Activated naive CD4-positive, alpha-beta T cell treated with anti-CD3 and anti-CD28 coated beads for 36 hours (primary cell): ENCODE measurements at regions of chr4 and their contacts with region 1.

Region 1: GRCh38 chr4:128454281-128455075 is 166.9 kb upstream of the PGRMC2 start:
- DNase-seq: peak; percentile 84
- H3K4me3 Mint-ChIP-seq: peak overlapping the region; percentile 21
- H3K27ac Mint-ChIP-seq: no peak overlapping the region
- H3K4me1 Mint-ChIP-seq: peaks cover 8% of the 10 kb centered on the region
- H3K27me3 Mint-ChIP-seq: no peaks in the 10 kb centered on the region

Region 2: DNA sequence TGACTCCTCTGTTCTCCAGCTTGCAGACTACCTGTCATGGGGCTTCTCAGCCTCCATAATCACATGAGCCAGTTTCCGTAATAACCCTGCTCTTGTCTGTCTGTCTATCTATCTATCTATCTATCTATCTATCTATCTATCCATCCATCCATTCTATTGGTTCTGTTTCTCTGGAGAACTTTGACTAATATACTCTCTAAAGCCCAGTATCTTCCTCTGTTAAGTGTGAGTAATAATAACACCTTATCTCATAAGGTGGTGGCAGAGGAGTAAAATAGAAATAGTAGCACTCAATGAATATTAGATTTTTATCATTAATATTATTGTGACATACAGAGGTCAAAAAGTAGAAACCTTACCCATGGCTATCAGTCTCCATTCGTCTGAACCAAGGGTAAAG is 11.0 kb after region 1 on chr4:
- CTCF ChIA-PET with region 1: interaction called, 14 read pairs
- intact Hi-C with region 1: no loop called
- DNase-seq: no peak
- H3K4me3 Mint-ChIP-seq: no peak overlapping the region
- H3K27ac Mint-ChIP-seq: no peak overlapping the region
- H3K4me1 Mint-ChIP-seq: no peaks in the 10 kb centered on the region
- H3K27me3 Mint-ChIP-seq: no peaks in the 10 kb centered on the region

Region 3: DNA sequence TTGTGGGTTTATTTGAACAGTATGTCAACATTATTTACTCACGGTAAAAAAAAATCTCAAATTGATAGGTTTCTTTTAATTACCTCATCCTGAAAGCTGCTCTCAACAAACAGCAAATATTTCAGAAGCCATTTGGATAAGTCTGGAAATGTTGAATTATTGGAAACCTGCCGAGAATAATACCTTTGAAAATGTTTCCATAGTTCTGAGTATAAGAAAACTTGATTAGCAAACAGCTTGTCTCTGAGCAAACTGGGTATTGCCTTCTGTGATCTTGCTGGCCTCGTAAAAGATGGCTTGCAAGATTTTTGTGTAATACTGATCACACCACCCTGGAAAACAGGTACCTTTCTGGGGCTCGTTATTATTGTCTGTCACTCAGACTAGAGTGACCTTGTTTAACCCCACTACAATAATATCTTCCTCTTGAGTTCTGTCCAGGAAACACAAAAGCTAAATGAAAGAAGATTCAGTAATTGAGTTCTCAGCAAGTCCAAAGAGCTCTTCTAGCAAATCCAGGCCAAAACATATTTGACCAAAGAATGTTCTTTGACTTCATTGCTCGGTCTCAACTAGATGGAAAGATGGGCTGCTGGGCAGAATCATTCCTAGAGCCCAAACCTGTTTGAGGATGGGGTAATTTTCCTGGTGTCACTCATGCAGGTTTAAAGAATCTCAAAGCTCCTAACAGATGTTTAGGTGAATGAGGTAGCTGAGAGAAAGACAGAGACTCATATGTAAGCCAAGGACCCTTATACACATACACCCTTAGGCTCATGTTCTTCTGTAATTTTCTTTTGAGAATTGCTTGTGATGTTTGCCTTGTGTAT is 99.4 kb after region 1 on chr4:
- CTCF ChIA-PET with region 1: interaction called, 4 read pairs
- intact Hi-C with region 1: loop called (anchors 5 kb)
- DNase-seq: no peak
- H3K4me3 Mint-ChIP-seq: peak overlapping the region; percentile 73
- H3K27ac Mint-ChIP-seq: no peak overlapping the region
- H3K4me1 Mint-ChIP-seq: peaks cover 13% of the 10 kb centered on the region
- H3K27me3 Mint-ChIP-seq: peaks cover 7% of the 10 kb centered on the region

Region 4: DNA sequence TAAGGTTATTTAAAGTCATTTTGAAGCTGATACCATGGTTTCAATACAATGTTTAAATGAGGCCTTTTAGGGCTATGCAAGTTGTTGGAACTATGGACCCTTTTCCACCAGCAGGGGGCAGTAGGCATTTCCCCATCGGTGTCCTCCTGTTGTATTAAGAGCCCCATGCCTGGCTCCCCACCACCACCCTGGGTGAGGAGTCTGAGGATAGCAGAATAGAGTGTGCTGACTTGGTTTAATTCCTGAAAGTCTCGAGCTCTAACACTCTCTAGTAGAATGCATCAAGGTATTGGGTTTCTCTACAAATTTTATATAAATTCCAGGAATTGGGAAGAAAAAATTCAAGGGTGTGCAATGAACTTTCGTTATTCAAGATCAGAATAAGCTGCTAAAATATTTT is 120.2 kb after region 1 on chr4:
- CTCF ChIA-PET with region 1: interaction called, 10 read pairs
- intact Hi-C with region 1: loop called (anchors 5 kb)
- DNase-seq: peak; percentile 91
- H3K4me3 Mint-ChIP-seq: no peak overlapping the region
- H3K27ac Mint-ChIP-seq: no peak overlapping the region
- H3K4me1 Mint-ChIP-seq: no peaks in the 10 kb centered on the region
- H3K27me3 Mint-ChIP-seq: peaks cover 6% of the 10 kb centered on the region

Region 5: DNA sequence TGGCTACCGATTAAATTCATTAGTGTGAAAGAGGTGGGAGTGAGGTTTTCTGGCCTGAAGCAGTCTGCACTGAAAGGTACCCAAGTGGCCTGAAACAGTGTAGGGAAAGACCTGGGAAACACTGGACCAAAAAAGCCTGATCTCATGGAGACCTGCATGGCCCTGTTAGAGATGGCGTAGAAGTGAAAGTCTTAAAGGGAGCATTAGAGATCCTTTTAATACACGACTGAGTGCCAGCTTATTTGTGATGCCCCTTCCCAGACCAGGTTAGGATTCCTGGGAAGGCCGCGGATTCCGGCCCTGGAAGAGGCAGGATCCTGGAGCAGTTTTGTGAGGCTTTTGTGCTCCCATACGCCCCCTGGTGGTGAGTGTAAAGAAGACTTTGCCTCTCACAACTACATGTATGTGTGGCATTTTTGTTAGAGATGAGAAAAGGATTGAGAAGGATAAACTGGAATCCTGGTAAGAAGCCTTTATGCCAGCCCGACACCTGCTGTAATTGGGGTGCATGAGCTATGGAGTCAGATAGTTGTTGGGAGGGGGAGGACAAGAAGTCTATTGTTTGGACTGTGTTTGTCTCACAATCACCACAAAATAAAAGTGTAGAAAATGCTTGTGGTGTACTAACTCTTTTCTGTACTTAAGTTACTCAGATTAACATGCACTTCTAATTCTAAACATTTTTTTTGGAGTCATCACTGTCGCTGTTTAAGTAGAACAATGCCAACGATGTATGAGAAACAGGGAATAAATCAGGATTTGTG is 409.0 kb after region 1 on chr4:
- CTCF ChIA-PET with region 1: interaction called, 5 read pairs
- intact Hi-C with region 1: loop called (anchors 1 kb)
- DNase-seq: peak; percentile 75
- H3K4me3 Mint-ChIP-seq: no peak overlapping the region
- H3K27ac Mint-ChIP-seq: peak overlapping the region; percentile 62
- H3K4me1 Mint-ChIP-seq: peaks cover 48% of the 10 kb centered on the region
- H3K27me3 Mint-ChIP-seq: no peaks in the 10 kb centered on the region